MCF 10A (cell line): ENCODE measurements at regions of chr20 and their contacts with region 1.

Region 1: GRCh38 chr20:22684072-22684762 is 99.8 kb upstream of the FOXA2 start:
- DNase-seq: peak; percentile 82
- H3K4me3 Mint-ChIP-seq: no peak overlapping the region
- H3K27ac Mint-ChIP-seq: no peak overlapping the region
- H3K4me1 Mint-ChIP-seq: peaks cover 29% of the 10 kb centered on the region
- H3K27me3 Mint-ChIP-seq: no peaks in the 10 kb centered on the region
- CTCF ChIP-seq: peak; percentile 87

Region 2: DNA sequence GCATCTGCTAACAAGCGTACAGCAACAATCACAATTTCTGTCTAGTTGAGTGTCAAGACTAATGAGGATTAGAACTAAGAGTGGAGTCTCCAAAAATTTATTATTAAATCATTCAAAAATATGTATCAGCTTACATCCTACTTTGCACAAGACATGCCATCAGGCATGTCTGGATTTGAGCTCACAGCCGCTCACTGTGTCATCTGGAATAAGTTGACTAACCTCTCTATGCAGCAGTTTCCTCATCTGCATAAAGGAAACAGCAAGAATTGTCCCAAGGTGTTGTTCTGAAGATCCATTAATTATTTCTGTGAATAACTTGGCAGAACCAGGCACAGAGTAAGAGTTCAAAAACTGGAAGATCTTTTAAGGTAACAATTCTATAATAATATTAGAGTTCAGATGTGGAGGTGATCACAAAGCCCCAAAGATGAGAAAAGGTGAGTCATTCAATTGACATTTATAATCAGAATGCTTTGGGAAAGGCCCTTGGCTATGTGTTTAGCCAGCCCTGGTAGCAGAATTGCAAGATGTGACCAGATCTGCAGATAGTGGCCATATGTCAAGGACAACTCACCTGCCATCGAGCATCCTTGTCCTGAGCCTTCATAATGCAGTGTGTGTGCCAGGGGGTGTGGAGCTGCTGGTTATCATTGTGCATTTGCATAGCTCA is 363.8 kb before region 1 on chr20:
- CTCF ChIA-PET with region 1: interaction called, 13 read pairs
- POLR2A ChIA-PET with region 1: no interaction called
- intact Hi-C with region 1: no loop called
- DNase-seq: peak; percentile 18
- H3K4me3 Mint-ChIP-seq: no peak overlapping the region
- H3K27ac Mint-ChIP-seq: peak overlapping the region; percentile 11
- H3K4me1 Mint-ChIP-seq: peaks cover 15% of the 10 kb centered on the region
- H3K27me3 Mint-ChIP-seq: no peaks in the 10 kb centered on the region
- CTCF ChIP-seq: no peak

Region 3: GRCh38 chr20:22353586-22353985 is 330.6 kb before region 1 on chr20:
- CTCF ChIA-PET with region 1: interaction called, 60 read pairs
- POLR2A ChIA-PET with region 1: no interaction called
- intact Hi-C with region 1: no loop called
- DNase-seq: peak; percentile 42
- H3K4me3 Mint-ChIP-seq: no peak overlapping the region
- H3K27ac Mint-ChIP-seq: no peak overlapping the region
- H3K4me1 Mint-ChIP-seq: no peaks in the 10 kb centered on the region
- H3K27me3 Mint-ChIP-seq: no peaks in the 10 kb centered on the region
- CTCF ChIP-seq: no peak

Region 4: DNA sequence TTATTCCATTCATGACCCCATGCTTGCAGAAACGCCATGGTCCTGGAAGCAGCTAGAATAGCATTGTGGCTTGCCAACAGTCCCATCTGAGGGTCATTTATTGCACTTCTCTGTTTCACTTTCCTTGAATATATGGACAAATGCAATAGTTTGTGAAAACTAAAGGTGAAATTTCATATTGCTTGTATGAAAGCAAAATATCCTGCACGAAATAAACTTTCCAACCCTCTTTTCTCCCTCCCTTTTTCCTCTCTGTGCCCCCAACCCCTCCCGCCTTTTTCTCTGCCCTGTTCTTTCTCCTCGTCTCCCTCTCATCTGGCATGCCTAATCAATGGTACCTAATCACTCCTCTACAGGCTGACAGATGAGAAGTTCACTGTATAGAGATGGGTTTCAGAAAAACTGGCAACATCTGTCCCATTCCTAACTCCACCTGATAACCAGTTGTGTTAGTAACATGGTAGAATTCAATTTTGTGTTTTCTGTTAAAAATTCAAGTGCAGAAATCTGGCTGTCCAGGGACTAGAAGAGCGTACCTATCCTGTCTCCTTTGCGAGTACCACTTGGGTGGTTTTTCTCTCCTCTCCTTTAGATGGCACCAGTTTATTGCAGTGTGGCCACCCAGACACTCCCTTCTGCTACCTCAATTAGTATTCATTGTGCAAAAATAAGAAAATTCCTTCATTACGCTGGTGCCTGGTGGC is 298.5 kb before region 1 on chr20:
- CTCF ChIA-PET with region 1: interaction called, 25 read pairs
- POLR2A ChIA-PET with region 1: interaction called, 5 read pairs
- intact Hi-C with region 1: loop called (anchors 1 kb)
- DNase-seq: peak; percentile 50
- H3K4me3 Mint-ChIP-seq: no peak overlapping the region
- H3K27ac Mint-ChIP-seq: no peak overlapping the region
- H3K4me1 Mint-ChIP-seq: peaks cover 51% of the 10 kb centered on the region
- H3K27me3 Mint-ChIP-seq: no peaks in the 10 kb centered on the region
- CTCF ChIP-seq: peak; percentile 27

Region 5: DNA sequence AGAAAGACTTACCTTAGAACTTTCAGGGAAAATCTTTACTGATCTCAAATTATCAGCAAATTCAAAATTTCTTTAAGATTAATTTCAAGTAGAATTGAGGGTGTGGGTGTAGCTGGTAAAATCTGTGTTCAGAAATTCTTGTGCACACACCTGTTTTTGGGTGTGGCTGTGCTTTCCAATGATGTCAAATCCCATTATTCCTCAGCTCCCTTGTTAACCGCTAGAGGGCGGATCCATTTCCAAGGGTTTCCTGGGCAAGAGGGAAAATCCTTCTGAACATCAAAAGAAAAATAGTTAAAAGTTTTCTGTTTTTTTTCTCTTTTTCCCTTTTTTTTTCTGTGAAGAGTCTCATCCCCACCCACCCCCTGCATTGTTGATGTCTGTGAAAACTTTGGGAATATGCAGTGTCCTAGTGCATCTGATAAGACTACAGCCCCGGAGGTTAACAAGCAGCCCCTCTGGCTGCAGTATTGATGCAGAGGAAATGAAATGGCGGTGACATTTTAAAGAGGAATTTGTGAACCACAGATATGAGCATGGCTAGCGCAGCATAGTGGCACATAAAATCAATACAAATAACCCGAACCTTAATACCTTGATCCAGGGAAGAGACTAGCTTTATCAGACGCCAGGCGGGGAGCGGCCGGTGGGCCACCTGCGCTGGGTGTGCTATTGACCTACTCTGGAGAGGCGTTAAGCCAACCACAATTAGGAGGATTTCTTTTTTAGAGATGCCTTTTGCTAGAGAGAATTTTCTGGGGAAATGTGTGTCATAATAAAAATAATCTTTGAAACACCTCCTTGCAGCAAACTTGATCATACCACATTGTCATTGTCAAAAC is 230.8 kb before region 1 on chr20:
- CTCF ChIA-PET with region 1: interaction called, 38 read pairs
- POLR2A ChIA-PET with region 1: no interaction called
- intact Hi-C with region 1: loop called (anchors 2 kb)
- DNase-seq: peak; percentile 67
- H3K4me3 Mint-ChIP-seq: no peak overlapping the region
- H3K27ac Mint-ChIP-seq: peak overlapping the region; percentile 31
- H3K4me1 Mint-ChIP-seq: no peaks in the 10 kb centered on the region
- H3K27me3 Mint-ChIP-seq: no peaks in the 10 kb centered on the region
- CTCF ChIP-seq: peak; percentile 74

Region 6: DNA sequence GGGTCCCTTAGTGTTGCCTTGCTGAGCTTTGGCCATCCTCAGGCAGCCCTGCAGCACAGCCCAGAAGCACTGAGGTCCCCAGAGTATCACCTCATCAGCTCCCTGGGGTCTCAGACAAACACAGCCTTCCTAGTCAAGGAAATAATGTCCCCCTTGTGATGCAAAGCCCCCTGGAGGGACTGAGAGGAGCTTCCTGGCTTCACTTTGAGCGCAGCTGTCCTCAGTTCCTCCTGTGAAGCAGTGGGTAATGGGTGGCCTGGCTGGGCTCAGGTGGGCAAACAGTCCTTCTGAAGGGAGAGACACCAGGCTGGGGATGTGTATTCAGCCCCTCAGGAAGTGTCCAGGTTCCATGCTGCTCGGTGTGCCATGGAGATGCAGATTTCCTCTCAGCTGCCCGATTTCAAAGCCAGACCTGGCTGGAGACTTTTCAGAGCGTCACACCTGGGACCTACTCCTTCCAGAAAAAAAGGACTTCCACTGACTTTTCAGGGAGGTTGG is 20.6 kb before region 1 on chr20:
- CTCF ChIA-PET with region 1: interaction called, 28 read pairs
- POLR2A ChIA-PET with region 1: no interaction called
- intact Hi-C with region 1: no loop called
- DNase-seq: no peak
- H3K4me3 Mint-ChIP-seq: no peak overlapping the region
- H3K27ac Mint-ChIP-seq: no peak overlapping the region
- H3K4me1 Mint-ChIP-seq: no peaks in the 10 kb centered on the region
- H3K27me3 Mint-ChIP-seq: peaks cover 14% of the 10 kb centered on the region
- CTCF ChIP-seq: no peak